ENCODE measurements at regions of chrX and their contacts with region 1.

Region 1: DNA sequence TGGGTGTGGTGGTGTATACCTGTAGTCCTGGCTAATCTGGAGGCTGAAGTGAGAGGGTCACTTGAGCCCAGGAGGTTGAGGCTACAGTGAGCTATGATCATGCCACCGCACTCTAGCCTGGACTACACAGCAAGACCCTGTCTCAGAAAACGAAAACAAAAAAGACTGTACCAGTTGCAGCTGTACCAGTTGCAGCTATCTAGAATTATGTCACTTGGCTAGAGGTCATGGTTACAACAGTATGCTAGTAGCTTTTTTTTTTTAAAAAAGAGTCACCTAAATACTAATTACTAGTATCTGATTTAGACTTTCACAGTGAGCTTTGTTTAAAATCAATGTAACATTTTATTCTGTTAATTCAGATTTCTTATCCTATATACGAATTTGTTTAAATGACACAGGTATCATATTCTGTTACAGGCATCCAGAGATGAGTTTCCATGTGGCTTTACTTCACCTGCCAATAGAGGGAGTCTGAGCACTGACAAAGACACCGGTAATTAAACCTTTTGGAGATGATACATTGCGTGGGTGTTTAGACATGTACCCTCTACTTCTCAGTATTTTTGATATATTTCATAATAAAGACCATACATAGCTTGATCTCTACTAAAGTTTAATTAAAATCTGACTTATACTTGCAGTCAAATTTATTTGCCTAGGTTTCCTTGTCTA is 100.2 kb upstream of the IL13RA1 start:
- DNase-seq: no peak
- ATAC-seq: peak; percentile 57; the same call in 2 of the 3 replicates
- H3K4me3 ChIP-seq: no peak overlapping the region
- H3K27ac ChIP-seq: no peak overlapping the region
- H3K4me1 ChIP-seq: no peaks in the 10 kb centered on the region
- H3K27me3 ChIP-seq: no peaks in the 10 kb centered on the region
- CTCF ChIP-seq: peak; percentile 41 to 55 (median 44); a peak in 5 of 6 replicates
- EP300 ChIP-seq: no peak
- POLR2A ChIP-seq: no peak
- RAD21 ChIP-seq: peak; percentile 65

Region 2: DNA sequence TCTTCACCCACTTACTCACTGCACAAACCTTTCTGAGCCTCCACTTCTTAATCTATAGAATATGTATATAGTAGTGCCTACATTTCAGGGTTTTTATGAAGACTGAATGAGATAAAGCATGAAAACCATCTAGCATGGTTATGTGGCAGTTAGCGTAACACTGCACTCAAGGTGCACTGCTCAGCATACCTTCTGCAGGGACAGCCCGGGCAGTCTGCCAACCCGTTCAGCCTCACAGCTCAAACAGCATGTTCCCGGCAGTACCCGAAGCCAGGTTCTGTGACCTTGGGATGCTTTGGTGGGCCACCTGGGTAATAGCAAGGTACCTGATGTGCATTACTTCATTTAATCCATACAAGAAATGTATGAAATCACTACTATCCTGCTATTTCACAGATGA is 50.2 kb before region 1 on chrX:
- CTCF ChIA-PET with region 1: no interaction called
- POLR2A ChIA-PET with region 1: no interaction called
- RAD21 ChIA-PET with region 1: no interaction called
- SMC1A ChIA-PET with region 1: no interaction called
- in situ Hi-C with region 1: no loop called
- intact Hi-C with region 1: no loop called
- DNase-seq: no peak
- ATAC-seq: no peak
- H3K4me3 ChIP-seq: no peak overlapping the region
- H3K27ac ChIP-seq: no peak overlapping the region
- H3K4me1 ChIP-seq: no peaks in the 10 kb centered on the region
- H3K27me3 ChIP-seq: no peaks in the 10 kb centered on the region
- CTCF ChIP-seq: no peak
- EP300 ChIP-seq: no peak
- POLR2A ChIP-seq: no peak
- RAD21 ChIP-seq: no peak

Region 3: DNA sequence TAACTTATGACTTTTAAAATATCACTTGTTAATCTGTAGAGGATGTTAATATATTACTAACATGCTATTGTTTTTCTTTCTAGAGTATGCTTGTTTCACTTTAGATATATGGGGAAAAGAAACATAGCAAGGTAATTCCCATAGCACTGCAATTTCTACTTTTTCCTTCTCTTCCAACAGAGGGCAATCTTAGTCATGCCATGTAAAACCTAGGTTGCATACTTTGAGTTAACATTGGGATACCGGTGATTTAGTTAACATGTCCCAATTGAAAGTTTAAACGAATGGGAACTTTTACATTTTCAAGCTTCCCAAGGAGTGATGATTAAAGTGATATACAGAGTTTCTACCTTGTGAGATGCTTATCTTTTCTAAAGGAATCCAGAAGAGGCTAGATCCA is 10.8 kb after region 1 on chrX:
- CTCF ChIA-PET with region 1: interaction called, 13 read pairs
- POLR2A ChIA-PET with region 1: no interaction called
- RAD21 ChIA-PET with region 1: interaction called, 4 read pairs
- SMC1A ChIA-PET with region 1: interaction called, 14 read pairs
- in situ Hi-C with region 1: no loop called
- intact Hi-C with region 1: no loop called
- DNase-seq: no peak
- ATAC-seq: no peak
- H3K4me3 ChIP-seq: no peak overlapping the region
- H3K27ac ChIP-seq: no peak overlapping the region
- H3K4me1 ChIP-seq: peaks cover 5% of the 10 kb centered on the region
- H3K27me3 ChIP-seq: no peaks in the 10 kb centered on the region
- CTCF ChIP-seq: peak in 1 of 3 experiments; percentile 18; a peak in 1 of 6 replicates
- EP300 ChIP-seq: no peak
- POLR2A ChIP-seq: no peak
- RAD21 ChIP-seq: no peak

Region 4: GRCh38 chrX:118644378-118644777 is 17.2 kb after region 1 on chrX:
- CTCF ChIA-PET with region 1: interaction called, 8 read pairs
- POLR2A ChIA-PET with region 1: no interaction called
- RAD21 ChIA-PET with region 1: interaction called, 7 read pairs
- SMC1A ChIA-PET with region 1: interaction called, 14 read pairs
- in situ Hi-C with region 1: no loop called
- intact Hi-C with region 1: no loop called
- DNase-seq: no peak
- ATAC-seq: peak; percentile 76
- H3K4me3 ChIP-seq: no peak overlapping the region
- H3K27ac ChIP-seq: no peak overlapping the region
- H3K4me1 ChIP-seq: no peaks in the 10 kb centered on the region
- H3K27me3 ChIP-seq: no peaks in the 10 kb centered on the region
- CTCF ChIP-seq: peak in 2 of 3 experiments; percentile 31 to 45; a peak in 3 of 6 replicates
- EP300 ChIP-seq: no peak
- POLR2A ChIP-seq: no peak
- RAD21 ChIP-seq: peak; percentile 43; the same call in 1 of the 2 replicates

Region 5: DNA sequence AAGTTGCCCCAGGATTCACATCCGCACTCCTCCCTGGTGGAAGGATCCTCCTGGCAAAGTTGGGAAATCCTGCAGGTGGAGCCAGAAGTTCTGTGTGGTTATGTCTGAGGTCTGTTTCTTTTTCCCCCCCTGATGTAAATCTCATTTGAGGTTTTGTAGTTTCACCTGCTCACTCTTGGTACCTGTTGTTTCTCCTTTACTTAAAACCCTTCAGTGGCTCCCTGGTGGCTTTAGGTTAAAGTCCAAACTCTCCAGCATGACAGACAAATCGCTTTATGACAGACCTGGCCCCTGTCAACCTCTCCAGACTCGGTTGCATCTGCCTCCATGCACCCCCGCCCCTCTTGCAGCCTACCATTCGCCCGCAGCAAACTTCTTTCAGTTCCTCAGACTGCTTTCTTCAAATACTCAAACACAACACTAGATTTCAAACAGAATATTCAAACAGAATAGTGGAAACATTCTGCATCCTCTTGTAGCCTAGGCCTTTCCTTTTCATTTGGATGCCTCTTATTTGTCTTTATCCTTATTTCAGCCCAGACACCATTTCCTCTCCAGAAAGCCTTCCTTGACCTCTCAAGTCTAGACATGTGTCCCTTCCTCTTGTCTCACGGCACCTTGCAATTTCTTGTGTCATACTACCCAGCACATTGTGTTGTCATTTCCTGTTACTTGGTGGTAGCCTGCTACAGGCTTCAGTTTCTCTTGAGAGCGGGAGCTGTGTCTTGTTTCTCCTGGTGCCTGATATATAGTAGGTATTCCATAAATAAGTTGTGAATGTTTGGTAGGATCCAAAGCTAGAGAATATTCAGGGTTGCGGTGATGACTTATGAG is 124.9 kb after region 1 on chrX:
- CTCF ChIA-PET with region 1: interaction called, 21 read pairs
- POLR2A ChIA-PET with region 1: no interaction called
- RAD21 ChIA-PET with region 1: interaction called, 3 read pairs
- SMC1A ChIA-PET with region 1: interaction called, 4 read pairs
- in situ Hi-C with region 1: no loop called
- intact Hi-C with region 1: no loop called
- DNase-seq: peak; percentile 36
- ATAC-seq: peak; percentile 94
- H3K4me3 ChIP-seq: no peak overlapping the region; the same call in 1 of the 2 replicates
- H3K27ac ChIP-seq: no peak overlapping the region
- H3K4me1 ChIP-seq: no peaks in the 10 kb centered on the region
- H3K27me3 ChIP-seq: no peaks in the 10 kb centered on the region
- CTCF ChIP-seq: no peak
- EP300 ChIP-seq: 0 out of 4 replicates have a peak, but pooled peaks of 1 of the 2 experiments have one; percentile 15
- POLR2A ChIP-seq: no peak
- RAD21 ChIP-seq: no peak

Region 6: GRCh38 chrX:118761939-118762707 is 134.9 kb after region 1 on chrX:
- CTCF ChIA-PET with region 1: interaction called, 13 read pairs
- POLR2A ChIA-PET with region 1: no interaction called
- RAD21 ChIA-PET with region 1: no interaction called
- SMC1A ChIA-PET with region 1: interaction called, 3 read pairs
- in situ Hi-C with region 1: no loop called
- intact Hi-C with region 1: no loop called
- DNase-seq: no peak
- ATAC-seq: peak; percentile 52; the same call in 2 of the 3 replicates
- H3K4me3 ChIP-seq: no peak overlapping the region
- H3K27ac ChIP-seq: no peak overlapping the region
- H3K4me1 ChIP-seq: no peaks in the 10 kb centered on the region
- H3K27me3 ChIP-seq: no peaks in the 10 kb centered on the region
- CTCF ChIP-seq: peak in 2 of 3 experiments; percentile 9 to 32; a peak in 2 of 6 replicates
- EP300 ChIP-seq: no peak
- POLR2A ChIP-seq: no peak
- RAD21 ChIP-seq: peak; percentile 41